ENCODE measurements at regions of chr7 and their contacts with region 1.

Region 1: GRCh38 chr7:13262929-13263530 is 575.6 kb downstream of the ARL4A start:
- DNase-seq: no peak
- ATAC-seq: peak; percentile 51 to 52
- H3K4me3 ChIP-seq: no peak overlapping the region
- H3K27ac ChIP-seq: no peak overlapping the region
- H3K4me1 ChIP-seq: no peaks in the 10 kb centered on the region
- H3K27me3 ChIP-seq: no peaks in the 10 kb centered on the region

Region 2: GRCh38 chr7:12524794-12525386 is 738.1 kb before region 1 on chr7:
- intact Hi-C with region 1: loop called in 3 of 4 experiments (anchors 5 to 10 kb)
- DNase-seq: no peak
- ATAC-seq: no peak
- H3K4me3 ChIP-seq: no peak overlapping the region
- H3K27ac ChIP-seq: no peak overlapping the region
- H3K4me1 ChIP-seq: no peaks in the 10 kb centered on the region
- H3K27me3 ChIP-seq: no peaks in the 10 kb centered on the region

Region 3: GRCh38 chr7:12638851-12639467 is 624.1 kb before region 1 on chr7:
- intact Hi-C with region 1: loop called (anchors 2 to 10 kb)
- DNase-seq: no peak
- ATAC-seq: peak in 1 of 2 donors; percentile 35
- H3K4me3 ChIP-seq: no peak overlapping the region
- H3K27ac ChIP-seq: no peak overlapping the region
- H3K4me1 ChIP-seq: no peaks in the 10 kb centered on the region
- H3K27me3 ChIP-seq: no peaks in the 10 kb centered on the region

Region 4: DNA sequence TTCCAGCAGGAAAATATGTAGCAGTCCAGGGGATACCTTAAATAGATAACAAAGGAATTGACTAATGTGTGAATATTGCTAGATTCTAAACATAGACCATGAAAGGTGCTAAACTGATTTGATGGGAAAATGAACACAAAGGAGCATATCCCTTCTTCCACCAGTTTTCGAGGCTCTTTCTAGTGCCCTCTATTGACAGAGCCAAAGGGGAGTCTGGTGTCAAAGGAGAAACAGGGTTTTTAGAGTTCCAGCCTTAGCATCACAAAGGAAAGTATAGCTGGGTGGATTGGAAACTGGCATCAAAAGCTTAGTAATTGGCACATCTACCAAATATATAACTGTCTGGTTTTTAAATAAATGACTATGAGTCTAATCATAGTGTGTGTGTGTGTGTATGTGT is 89.6 kb after region 1 on chr7:
- intact Hi-C with region 1: no loop called
- DNase-seq: no peak
- ATAC-seq: no peak
- H3K4me3 ChIP-seq: no peak overlapping the region
- H3K27ac ChIP-seq: no peak overlapping the region
- H3K4me1 ChIP-seq: no peaks in the 10 kb centered on the region
- H3K27me3 ChIP-seq: no peaks in the 10 kb centered on the region

Measured in right cardiac atrium (tissue), 5 donors.